ENCODE measurements at regions of chr3 and their contacts with region 1.

Region 1: DNA sequence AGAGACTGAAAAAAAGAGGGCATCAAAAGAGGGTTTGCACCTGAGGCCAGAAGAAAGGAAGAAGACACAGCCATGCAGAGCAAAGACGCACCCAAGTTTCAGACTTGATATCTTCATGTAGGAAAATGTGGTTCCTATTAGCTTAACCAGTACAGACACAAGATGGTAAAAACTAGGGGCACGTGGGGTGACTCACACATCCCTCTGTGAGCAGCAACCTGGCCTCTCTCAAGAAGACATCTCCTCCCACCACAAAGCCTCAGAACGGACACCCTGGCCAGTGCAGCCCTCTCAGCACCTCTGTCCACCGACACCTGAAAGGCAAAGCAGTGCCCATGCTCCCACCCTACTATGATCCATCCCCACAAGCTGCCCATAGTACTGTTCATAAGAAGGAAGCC is 33.3 kb downstream of the GLB1 start:
- DNase-seq: peak; percentile 83
- H3K4me3 Mint-ChIP-seq: peak overlapping the region; percentile 56
- H3K27ac Mint-ChIP-seq: peak overlapping the region; percentile 93
- H3K4me1 Mint-ChIP-seq: peaks cover 79% of the 10 kb centered on the region
- H3K27me3 Mint-ChIP-seq: no peaks in the 10 kb centered on the region

Region 2: DNA sequence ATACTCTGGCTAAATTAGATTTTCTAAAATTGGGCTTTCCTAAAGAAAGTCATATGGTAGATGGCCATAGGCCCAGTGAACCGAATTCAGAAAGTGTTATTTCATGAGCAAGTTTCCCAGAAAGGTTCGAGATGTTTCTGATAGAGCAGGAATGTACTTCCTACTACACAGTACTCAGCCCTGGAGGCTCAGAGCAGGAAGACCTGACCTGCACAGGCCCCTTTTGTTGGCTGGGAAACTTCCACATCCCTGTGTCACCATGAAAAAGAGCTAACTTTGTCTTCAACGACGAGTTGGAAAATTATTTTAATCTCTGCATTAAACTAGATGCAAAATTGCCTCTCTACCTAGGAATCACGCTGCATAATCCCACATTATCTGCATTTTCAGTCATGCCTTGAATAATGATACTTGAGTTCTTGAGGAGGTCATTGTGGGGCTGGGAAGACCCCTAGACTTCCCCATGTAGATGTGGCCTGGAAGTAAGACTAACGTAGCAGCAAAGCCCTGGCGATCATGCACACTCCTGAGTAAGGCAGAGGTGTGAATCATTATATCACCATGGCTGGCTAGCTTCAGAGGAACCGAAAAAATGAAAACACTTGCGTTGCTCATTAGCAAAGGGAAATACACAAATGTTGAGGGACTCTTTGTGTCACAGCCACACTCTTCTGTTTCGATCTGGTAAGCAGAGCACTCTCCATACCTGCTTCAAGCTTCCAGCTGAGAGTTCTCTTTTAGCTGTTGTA is 624.9 kb before region 1 on chr3:
- CTCF ChIA-PET with region 1: no interaction called
- POLR2A ChIA-PET with region 1: no interaction called
- intact Hi-C with region 1: loop called (anchors 10 kb)
- DNase-seq: peak; percentile 63
- H3K4me3 Mint-ChIP-seq: peak overlapping the region; percentile 21
- H3K27ac Mint-ChIP-seq: peak overlapping the region; percentile 87
- H3K4me1 Mint-ChIP-seq: peaks cover 74% of the 10 kb centered on the region
- H3K27me3 Mint-ChIP-seq: no peaks in the 10 kb centered on the region

Region 3: GRCh38 chr3:32992322-32992692 is 71.3 kb before region 1 on chr3:
- CTCF ChIA-PET with region 1: no interaction called
- POLR2A ChIA-PET with region 1: interaction called, 79 read pairs
- intact Hi-C with region 1: loop called (anchors 1 kb)
- DNase-seq: no peak
- H3K4me3 Mint-ChIP-seq: peak overlapping the region; percentile 73
- H3K27ac Mint-ChIP-seq: peak overlapping the region; percentile 92
- H3K4me1 Mint-ChIP-seq: peaks cover 87% of the 10 kb centered on the region
- H3K27me3 Mint-ChIP-seq: no peaks in the 10 kb centered on the region

Region 4: DNA sequence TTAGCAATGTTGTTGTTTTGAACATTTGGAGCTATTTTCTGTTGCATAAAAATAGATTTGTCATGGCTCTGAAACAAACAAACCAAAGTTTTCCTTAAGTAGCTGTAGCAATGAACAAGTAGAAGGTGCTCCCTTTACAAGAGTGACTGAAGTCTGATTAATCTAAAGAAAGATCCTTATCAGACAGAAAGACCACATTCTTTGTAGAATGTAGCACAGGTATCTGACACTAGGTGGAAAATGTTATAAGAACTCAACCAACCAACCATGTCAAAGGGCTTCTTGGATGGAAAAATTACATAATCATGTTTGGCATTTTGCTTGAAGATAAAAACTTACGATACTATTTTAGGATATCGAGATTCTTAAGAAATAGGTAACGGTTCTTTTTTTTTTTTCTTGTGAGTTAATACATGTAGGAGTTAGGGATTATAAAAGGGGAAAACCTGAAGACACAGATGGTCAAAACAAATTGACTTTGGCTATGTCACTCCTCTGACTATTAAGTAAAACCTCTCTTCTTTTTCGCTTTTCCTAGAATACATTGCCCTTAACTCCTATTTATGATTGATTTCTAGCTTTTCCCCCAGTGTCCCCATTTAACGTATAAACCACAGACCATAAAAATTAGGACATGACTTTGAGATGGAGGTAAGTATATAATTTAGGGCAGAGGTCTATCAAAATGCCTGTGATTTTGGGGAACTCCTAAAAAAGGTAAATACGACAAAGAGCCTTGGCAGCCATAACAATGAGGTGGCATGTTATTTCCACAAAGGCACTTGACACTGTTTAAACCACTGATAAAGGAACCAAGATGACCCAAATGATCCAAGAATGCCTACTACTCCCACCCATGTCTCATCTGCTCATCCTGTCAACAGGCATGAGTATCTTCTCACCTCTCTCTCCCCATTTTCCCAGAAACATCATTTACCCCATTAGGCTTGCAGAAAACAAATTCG is 40.2 kb before region 1 on chr3:
- CTCF ChIA-PET with region 1: interaction called, 24 read pairs
- POLR2A ChIA-PET with region 1: interaction called, 23 read pairs
- intact Hi-C with region 1: loop called (anchors 1 kb)
- DNase-seq: no peak
- H3K4me3 Mint-ChIP-seq: peak overlapping the region; percentile 7
- H3K27ac Mint-ChIP-seq: peak overlapping the region; percentile 90
- H3K4me1 Mint-ChIP-seq: peaks cover 60% of the 10 kb centered on the region
- H3K27me3 Mint-ChIP-seq: no peaks in the 10 kb centered on the region

Region 5: GRCh38 chr3:33074217-33075067 is 10.8 kb after region 1 on chr3:
- CTCF ChIA-PET with region 1: interaction called, 29 read pairs
- POLR2A ChIA-PET with region 1: interaction called, 6 read pairs
- intact Hi-C with region 1: no loop called
- DNase-seq: peak; percentile 82
- H3K4me3 Mint-ChIP-seq: no peak overlapping the region
- H3K27ac Mint-ChIP-seq: peak overlapping the region; percentile 21
- H3K4me1 Mint-ChIP-seq: peaks cover 43% of the 10 kb centered on the region
- H3K27me3 Mint-ChIP-seq: no peaks in the 10 kb centered on the region

Region 6: DNA sequence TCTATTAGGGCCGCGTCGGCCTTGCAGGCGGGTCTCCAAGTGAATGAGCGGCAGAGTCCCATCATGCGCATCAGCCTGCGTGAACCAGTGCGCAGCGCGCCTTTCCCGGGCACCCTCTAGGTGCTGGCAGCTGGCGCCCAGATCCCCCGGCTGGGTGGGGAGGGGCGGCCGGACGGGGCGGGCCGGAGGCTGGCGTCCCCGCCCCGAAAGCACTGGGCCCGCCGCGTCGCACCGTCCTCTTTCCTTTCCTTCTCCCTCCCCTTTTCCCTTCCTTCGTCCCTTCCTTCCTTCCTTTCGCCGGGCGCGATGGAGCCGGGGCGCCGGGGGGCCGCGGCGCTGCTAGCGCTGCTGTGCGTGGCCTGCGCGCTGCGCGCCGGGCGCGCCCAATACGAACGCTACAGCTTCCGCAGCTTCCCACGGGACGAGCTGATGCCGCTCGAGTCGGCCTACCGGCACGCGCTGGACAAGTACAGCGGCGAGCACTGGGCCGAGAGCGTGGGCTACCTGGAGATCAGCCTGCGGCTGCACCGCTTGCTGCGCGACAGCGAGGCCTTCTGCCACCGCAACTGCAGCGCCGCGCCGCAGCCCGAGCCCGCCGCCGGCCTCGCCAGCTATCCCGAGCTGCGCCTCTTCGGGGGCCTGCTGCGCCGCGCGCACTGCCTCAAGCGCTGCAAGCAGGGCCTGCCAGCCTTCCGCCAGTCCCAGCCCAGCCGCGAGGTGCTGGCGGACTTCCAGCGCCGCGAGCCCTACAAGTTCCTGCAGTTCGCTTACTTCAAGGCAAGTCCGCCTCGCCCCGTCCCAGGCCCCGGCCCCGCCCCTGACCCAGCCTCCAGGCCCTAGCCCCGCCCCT is 50.3 kb after region 1 on chr3 and contains the start of gene CRTAP:
- CTCF ChIA-PET with region 1: no interaction called
- POLR2A ChIA-PET with region 1: no interaction called
- intact Hi-C with region 1: loop called (anchors 2 kb)
- DNase-seq: peak; percentile 91
- H3K4me3 Mint-ChIP-seq: peak within 1 kb of the TSS; percentile 80
- H3K27ac Mint-ChIP-seq: peak within 1 kb of the TSS; percentile 73
- H3K4me1 Mint-ChIP-seq: peaks cover 59% of the 10 kb centered on the region
- H3K27me3 Mint-ChIP-seq: no peaks in the 10 kb centered on the region
- total RNA-seq, gene CRTAP: 57.6 to 60.0 TPM